Activated CD4-positive, alpha-beta T cell treated with anti-CD3 and anti-CD28 coated beads for 36 hours (primary cell): ENCODE measurements at regions of chr6 and their contacts with region 1.

Region 1: DNA sequence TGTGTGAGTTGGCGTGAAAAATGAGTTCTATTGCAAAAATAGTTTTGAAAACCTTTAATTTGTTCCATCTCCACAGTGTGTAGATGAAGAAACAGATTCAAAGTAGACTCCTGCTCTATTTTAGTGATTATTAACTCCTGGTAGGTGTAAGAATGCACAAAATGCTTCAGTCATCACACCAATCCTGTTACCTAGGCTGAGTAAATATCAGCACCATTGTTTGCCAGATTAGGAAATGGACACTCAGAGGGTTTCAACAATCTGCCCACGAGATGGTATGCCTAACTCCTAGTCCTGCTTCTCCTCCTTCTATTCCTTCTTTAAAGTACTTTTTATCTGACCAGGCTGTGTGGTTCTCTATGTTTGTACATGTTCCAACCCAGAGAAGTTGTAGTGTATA is 108.9 kb upstream of the AHI1 start:
- DNase-seq: no peak
- ATAC-seq: no peak
- H3K4me3 Mint-ChIP-seq: no peak overlapping the region
- H3K27ac Mint-ChIP-seq: peak overlapping the region; percentile 20
- H3K4me1 Mint-ChIP-seq: peaks cover 30% of the 10 kb centered on the region
- H3K27me3 Mint-ChIP-seq: no peaks in the 10 kb centered on the region

Region 2: DNA sequence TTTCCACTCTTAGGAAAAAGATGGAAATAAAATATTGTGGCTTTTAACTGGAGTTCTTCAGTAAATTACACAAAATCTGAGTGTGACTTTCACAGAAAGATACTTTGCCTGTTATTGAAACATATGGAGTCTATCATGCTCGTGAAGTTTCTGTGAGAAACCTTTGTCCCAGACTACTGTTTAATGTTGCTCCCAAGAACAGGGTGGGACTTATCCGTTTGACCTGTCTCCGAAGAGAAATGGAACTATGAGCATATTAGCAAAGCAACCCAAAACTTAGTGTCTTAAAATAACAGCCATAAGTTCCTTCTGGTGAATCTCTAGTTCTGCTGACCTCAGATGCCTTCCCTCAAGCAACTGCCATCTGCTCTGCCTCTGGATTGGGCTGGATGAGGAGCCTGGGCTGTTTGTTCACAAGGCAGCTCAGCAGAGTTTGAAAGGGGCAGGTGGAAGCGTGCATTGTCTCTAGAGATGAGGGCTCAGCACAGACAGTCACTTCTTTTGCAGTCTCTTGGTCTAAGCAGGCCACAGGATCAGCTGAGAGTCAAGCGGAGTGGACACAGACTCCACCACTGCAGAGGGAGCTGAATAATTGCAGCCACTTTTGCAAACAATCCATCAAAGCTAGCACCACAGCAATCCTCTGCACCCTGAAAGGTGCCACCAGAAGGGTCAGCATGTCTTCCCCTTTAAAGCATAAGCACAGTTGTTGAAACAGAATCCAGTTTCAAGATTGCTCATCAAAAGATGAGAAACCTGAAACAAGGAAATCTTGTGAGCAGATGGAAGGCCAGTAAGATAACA is 372.5 kb before region 1 on chr6:
- CTCF ChIA-PET with region 1: no interaction called
- POLR2A ChIA-PET with region 1: no interaction called
- intact Hi-C with region 1: no loop called
- DNase-seq: no peak
- ATAC-seq: peak; percentile 24
- H3K4me3 Mint-ChIP-seq: no peak overlapping the region
- H3K27ac Mint-ChIP-seq: no peak overlapping the region
- H3K4me1 Mint-ChIP-seq: peaks cover 18% of the 10 kb centered on the region
- H3K27me3 Mint-ChIP-seq: no peaks in the 10 kb centered on the region

Region 3: DNA sequence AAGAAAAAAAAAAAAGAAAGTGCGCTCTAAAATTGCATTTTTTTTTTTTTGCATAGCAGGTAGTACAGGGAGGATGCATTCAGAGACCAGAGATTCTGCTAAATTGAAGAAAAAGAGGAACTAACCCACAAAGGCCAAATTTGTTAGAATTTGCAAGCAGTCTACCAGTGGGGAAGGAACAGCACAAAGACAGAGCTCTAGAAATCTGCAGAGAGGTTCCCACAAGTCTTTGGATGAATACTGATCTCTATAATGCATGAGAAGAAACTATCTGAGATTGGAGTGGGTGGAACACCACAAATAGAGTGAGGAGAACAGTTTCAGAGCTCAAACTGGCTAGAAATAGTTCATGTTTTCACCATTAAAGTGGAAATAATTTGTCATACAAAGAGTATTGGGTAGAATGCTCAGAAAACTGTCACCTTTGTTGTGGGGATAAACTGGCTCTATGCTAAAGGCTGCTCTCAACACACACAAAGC is 29.3 kb before region 1 on chr6:
- CTCF ChIA-PET with region 1: interaction called, 3 read pairs
- POLR2A ChIA-PET with region 1: no interaction called
- intact Hi-C with region 1: loop called in 1 of 2 experiments (anchors 1 kb)
- DNase-seq: no peak
- ATAC-seq: peak; percentile 94
- H3K4me3 Mint-ChIP-seq: peak overlapping the region; percentile 8
- H3K27ac Mint-ChIP-seq: peak overlapping the region; percentile 70
- H3K4me1 Mint-ChIP-seq: peaks cover 23% of the 10 kb centered on the region
- H3K27me3 Mint-ChIP-seq: no peaks in the 10 kb centered on the region

Region 4: DNA sequence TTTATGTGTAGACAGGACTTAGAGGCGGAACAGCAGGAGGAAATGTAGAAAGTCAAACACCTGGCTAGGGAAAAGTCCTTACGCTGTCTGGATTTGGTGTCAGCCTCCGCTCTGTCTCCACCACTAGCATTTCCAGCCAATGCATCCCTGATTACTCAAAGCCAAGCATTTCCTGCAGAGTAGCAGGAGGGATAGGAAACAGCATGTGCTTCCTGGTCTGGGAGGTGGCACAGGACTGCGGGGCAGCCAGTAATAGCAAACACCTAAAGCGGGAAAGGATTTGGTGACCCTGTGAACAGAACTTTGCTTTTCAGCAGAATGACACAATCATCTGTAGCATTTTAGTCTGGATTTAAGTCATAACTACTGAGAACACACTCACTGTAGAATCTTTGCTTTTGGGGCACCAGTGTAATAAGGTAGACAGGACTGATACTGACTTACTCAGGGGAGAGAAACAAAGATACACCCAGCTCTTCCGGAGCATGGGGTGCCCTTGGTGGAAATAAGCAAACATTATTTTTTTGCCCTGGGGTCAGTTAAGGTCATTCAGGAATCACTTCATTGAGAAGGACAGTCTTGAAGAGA is 24.5 kb after region 1 on chr6:
- CTCF ChIA-PET with region 1: no interaction called
- POLR2A ChIA-PET with region 1: no interaction called
- intact Hi-C with region 1: no loop called
- DNase-seq: no peak
- ATAC-seq: peak; percentile 81
- H3K4me3 Mint-ChIP-seq: no peak overlapping the region
- H3K27ac Mint-ChIP-seq: no peak overlapping the region
- H3K4me1 Mint-ChIP-seq: peaks cover 13% of the 10 kb centered on the region
- H3K27me3 Mint-ChIP-seq: peaks cover 3% of the 10 kb centered on the region